ENCODE measurements at regions of chr1 and their contacts with region 1.

Region 1: DNA sequence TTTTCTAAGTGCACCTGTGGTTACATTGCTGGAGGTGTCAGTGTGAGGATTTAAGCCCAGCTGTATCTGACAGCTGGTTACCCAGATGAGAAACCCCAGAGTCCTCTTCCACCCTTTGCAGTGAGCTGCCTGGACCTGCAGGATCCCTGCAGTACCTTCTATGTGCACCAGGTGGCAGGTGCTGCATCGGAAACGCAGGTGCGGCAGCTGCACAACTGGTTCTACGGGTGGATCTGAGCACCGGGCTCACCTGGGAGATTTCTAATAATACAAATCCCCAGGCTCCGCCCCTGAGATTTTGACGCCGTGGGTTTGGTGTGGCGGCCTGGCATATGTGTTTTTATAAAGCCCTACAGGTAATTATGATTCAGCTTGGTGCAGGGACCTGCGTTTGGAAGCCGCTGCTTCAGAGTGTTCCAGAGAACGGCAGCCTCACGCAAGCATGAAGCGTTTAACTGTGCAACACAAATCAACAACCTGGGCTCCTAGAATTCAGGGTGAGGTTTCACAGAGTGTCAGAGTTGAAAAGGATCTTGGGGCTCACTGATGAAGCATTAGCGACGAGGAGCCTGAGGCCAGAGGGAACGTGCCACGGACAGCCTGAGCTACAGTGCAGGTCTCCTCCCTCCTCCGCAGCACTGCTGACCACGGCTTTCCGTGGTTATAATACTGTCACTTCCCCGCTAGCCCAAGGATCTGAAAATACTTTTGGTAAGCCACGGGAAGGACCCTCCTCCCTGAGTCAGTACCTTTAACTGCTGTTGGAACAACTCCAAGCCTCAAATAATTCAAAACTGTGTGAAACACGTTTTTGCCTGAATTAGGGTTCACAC is 96.7 kb upstream of the TRABD2B start:
- DNase-seq: peak; percentile 85 to 87
- H3K4me3 ChIP-seq: peak overlapping the region in 2 of 3 donors; percentile 35 to 50
- H3K27ac ChIP-seq: no peak overlapping the region
- H3K4me1 ChIP-seq: no peaks in the 10 kb centered on the region
- H3K27me3 ChIP-seq: no peaks in the 10 kb centered on the region
- CTCF ChIP-seq: peak; percentile 72 to 86 (median 76)
- POLR2A ChIP-seq: no peak

Region 2: DNA sequence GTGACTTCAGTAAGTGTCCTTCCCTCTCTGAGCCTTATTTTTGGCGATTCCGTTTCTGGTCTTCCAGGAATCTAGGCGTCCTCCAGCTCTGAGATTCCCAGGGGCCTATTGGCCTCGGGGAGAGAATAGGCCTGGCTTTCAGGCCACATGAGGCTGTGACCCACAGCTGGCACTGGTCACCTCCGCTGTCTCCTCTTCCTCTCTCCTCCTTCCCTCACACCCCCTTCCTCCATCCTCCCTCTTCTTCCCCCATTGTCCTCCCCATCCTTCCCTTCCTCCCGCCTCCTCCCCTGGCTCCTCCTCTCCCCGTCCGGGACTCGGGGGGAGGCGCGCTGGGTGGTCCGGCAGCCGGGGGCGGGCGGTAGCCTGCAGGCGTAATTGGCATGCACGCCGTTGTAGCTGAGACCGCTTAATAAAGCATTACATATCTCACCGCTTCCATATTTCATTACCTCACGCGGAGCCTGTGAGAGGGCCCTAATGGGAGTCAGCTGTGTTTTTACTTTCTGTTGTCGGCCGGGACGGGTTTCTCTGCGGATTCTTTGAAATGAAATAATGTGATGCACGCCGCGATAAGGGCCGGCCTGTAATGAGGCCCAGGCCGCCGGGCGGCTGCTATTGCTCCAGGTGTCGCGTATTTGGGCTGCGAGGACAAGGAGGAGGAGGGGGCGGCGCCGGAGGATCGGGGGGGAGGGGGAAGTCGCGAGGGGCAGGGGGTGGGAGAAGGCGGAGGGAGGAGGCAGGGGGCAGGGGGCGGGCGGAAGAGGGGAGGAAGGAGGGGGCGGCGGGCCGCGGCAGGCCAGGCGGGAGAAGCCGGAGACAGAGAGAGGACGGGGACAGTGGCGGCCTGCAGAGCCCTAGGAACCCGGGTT is 560.8 kb before region 1 on chr1:
- intact Hi-C with region 1: no loop called
- DNase-seq: peak in 1 of 2 donors; percentile 21
- H3K4me3 ChIP-seq: peak overlapping the region; percentile 41 to 63 (median 51)
- H3K27ac ChIP-seq: peak overlapping the region in 1 of 2 donors; percentile 25
- H3K4me1 ChIP-seq: no peaks in the 10 kb centered on the region
- H3K27me3 ChIP-seq: no peaks in the 10 kb centered on the region
- CTCF ChIP-seq: no peak
- POLR2A ChIP-seq: no peak

Region 3: DNA sequence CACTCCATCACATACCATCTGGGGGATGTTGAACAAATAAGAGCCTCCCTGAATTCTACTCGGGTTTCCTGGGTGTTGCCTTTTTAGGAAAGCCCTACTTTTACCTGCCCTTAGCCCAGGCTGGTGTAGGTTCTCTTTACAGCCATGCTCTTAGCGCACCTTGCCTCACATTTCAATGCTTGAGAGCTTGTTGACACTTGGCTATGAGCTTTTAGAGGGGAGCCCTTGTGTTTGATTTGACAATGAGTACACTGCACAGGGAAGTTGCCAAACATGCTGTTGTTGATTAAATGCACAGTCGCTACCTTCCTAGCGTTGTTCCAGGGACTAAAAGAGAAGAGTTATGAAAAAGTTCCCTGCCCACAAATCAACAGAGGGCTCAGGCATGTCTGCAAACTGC is 200.5 kb before region 1 on chr1:
- intact Hi-C with region 1: loop called (anchors 2 kb)
- DNase-seq: no peak
- H3K4me3 ChIP-seq: no peak overlapping the region
- H3K27ac ChIP-seq: no peak overlapping the region
- H3K4me1 ChIP-seq: peaks cover 0 to 6% of the 10 kb centered on the region in 2 donors
- H3K27me3 ChIP-seq: no peaks in the 10 kb centered on the region
- CTCF ChIP-seq: no peak
- POLR2A ChIP-seq: no peak

Region 4: DNA sequence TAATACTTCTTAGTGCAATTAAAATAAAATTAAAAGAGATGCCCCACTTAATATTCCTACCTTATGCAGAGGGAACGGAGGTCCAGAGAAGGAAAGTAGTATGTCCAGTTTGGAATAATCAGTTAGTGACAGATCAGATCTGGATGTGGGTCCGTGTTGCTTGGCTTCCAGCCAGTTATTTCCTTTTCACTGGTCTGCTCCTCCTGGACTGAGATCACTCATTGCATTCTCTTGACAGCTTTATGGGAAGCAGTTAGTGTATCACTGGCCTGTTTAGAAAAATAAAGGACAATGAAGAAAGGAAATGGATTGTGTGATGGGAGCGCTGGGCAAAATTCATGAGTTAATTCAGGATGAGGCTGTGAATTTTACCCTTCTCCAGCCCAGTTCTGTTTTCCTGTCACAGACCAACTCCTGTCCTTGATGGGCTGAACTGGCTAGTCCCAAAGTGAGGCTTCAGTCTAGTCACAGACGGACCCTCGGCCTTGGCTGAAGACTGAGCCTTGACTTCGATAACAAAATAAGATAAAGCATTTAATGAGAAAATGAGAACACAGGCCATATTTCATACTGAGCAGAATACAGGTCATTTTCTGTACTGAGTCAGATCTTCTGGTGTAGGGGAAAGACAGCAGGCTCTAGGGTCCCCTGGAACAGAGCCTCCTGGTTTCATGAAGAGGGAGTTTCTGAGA is 11.5 kb before region 1 on chr1:
- intact Hi-C with region 1: no loop called
- DNase-seq: no peak
- H3K4me3 ChIP-seq: no peak overlapping the region
- H3K27ac ChIP-seq: no peak overlapping the region
- H3K4me1 ChIP-seq: no peaks in the 10 kb centered on the region
- H3K27me3 ChIP-seq: no peaks in the 10 kb centered on the region
- CTCF ChIP-seq: no peak
- POLR2A ChIP-seq: no peak

Region 5: GRCh38 chr1:49106445-49106844 is 1012.5 kb after region 1 on chr1:
- intact Hi-C with region 1: loop called (anchors 5 kb)
- DNase-seq: no peak
- H3K4me3 ChIP-seq: no peak overlapping the region
- H3K27ac ChIP-seq: no peak overlapping the region
- H3K4me1 ChIP-seq: no peaks in the 10 kb centered on the region
- H3K27me3 ChIP-seq: no peaks in the 10 kb centered on the region
- CTCF ChIP-seq: no peak
- POLR2A ChIP-seq: no peak